ENCODE measurements at regions of chr18 and their contacts with region 1.

Region 1: GRCh38 chr18:25866331-25866730 is 224.1 kb downstream of the SS18 start:
- DNase-seq: no peak
- H3K4me3 ChIP-seq: no peak overlapping the region
- H3K27ac ChIP-seq: no peak overlapping the region
- H3K4me1 ChIP-seq: no peaks in the 10 kb centered on the region
- H3K27me3 ChIP-seq: no peaks in the 10 kb centered on the region
- CTCF ChIP-seq: no peak
- EP300 ChIP-seq: no peak
- POLR2A ChIP-seq: no peak

Region 2: GRCh38 chr18:26022585-26022984 is 156.3 kb after region 1 on chr18:
- in situ Hi-C with region 1: no loop called
- intact Hi-C with region 1: no loop called
- DNase-seq: no peak
- H3K4me3 ChIP-seq: no peak overlapping the region
- H3K27ac ChIP-seq: no peak overlapping the region
- H3K4me1 ChIP-seq: no peaks in the 10 kb centered on the region
- H3K27me3 ChIP-seq: no peaks in the 10 kb centered on the region
- CTCF ChIP-seq: no peak
- EP300 ChIP-seq: no peak
- POLR2A ChIP-seq: no peak

Region 3: DNA sequence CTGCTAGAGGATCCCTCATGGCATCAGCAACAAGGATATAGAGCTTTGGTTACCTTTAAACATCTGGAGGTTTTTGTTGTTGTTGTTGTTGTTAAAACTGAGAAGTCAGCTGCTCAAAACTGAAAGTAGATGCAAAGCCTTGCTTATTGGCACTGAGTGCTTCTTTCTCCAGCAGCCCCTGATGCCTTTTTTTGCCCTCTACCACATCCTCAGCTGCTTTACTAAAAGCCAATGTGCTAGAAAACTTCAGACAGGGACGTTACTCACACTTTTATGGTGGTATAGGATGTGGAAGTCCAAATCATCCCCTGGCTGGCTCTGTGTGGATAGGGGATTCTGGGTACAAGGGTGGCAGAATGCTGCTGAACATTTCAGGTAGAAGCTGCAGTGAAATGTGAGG is 1397.0 kb after region 1 on chr18:
- in situ Hi-C with region 1: no loop called
- intact Hi-C with region 1: loop called (anchors 5 kb)
- DNase-seq: no peak
- H3K4me3 ChIP-seq: no peak overlapping the region
- H3K27ac ChIP-seq: no peak overlapping the region
- H3K4me1 ChIP-seq: no peaks in the 10 kb centered on the region
- H3K27me3 ChIP-seq: no peaks in the 10 kb centered on the region
- CTCF ChIP-seq: no peak
- EP300 ChIP-seq: no peak
- POLR2A ChIP-seq: no peak